Calu3 (cell line): ENCODE measurements at regions of chr9 and their contacts with region 1.

Region 1: GRCh38 chr9:88173378-88173999 is 35.2 kb upstream of the SPATA31C2 start:
- DNase-seq: peak; percentile 68
- H3K4me3 Mint-ChIP-seq: no peak overlapping the region
- H3K27ac Mint-ChIP-seq: no peak overlapping the region
- H3K4me1 Mint-ChIP-seq: no peaks in the 10 kb centered on the region
- H3K27me3 Mint-ChIP-seq: no peaks in the 10 kb centered on the region
- CTCF ChIP-seq: peak; percentile 83

Region 2: GRCh38 chr9:88578121-88579054 is 404.9 kb after region 1 on chr9:
- CTCF ChIA-PET with region 1: no interaction called
- intact Hi-C with region 1: loop called (anchors 5 kb)
- DNase-seq: peak; percentile 88
- H3K4me3 Mint-ChIP-seq: no peak overlapping the region
- H3K27ac Mint-ChIP-seq: no peak overlapping the region
- H3K4me1 Mint-ChIP-seq: no peaks in the 10 kb centered on the region
- H3K27me3 Mint-ChIP-seq: peaks cover 15% of the 10 kb centered on the region
- CTCF ChIP-seq: peak; percentile 84